ENCODE measurements at regions of chr18 and their contacts with region 1.

Region 1: GRCh38 chr18:63518178-63519012 is 23.8 kb upstream of the SERPINB12 start:
- DNase-seq: peak; percentile 35
- H3K4me3 ChIP-seq: no peak overlapping the region; a peak in 1 of 4 replicates
- H3K27ac ChIP-seq: no peak overlapping the region
- H3K4me1 ChIP-seq: no peaks in the 10 kb centered on the region
- H3K27me3 ChIP-seq: peaks cover 46% of the 10 kb centered on the region
- CTCF ChIP-seq: peak; percentile 80
- EP300 ChIP-seq: no peak
- RAD21 ChIP-seq: peak; percentile 85

Region 2: DNA sequence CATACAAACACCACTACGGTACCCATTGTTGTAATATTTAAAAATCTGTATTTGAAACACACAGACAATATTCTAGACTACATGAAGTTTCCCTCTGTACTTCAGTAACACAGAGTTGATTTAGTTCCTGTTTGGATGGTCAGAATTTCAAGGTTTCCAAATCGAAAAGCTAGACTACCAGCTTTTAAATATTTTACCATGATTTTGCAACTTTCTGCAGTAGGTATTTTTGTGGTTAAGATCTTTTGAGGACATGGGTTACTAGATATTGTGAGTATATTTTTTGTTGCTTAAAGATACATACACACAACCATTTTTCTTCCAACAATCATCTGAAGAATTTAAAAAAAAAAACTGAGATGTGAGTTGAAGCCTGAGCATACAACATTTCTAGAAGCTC is 30.7 kb before region 1 on chr18:
- CTCF ChIA-PET with region 1: interaction called, 11 read pairs
- POLR2A ChIA-PET with region 1: no interaction called
- DNase-seq: no peak
- H3K4me3 ChIP-seq: no peak overlapping the region
- H3K27ac ChIP-seq: no peak overlapping the region
- H3K4me1 ChIP-seq: no peaks in the 10 kb centered on the region
- H3K27me3 ChIP-seq: peaks cover 18% of the 10 kb centered on the region; the same call in 1 of the 2 replicates
- CTCF ChIP-seq: no peak
- EP300 ChIP-seq: no peak
- RAD21 ChIP-seq: no peak

Region 3: DNA sequence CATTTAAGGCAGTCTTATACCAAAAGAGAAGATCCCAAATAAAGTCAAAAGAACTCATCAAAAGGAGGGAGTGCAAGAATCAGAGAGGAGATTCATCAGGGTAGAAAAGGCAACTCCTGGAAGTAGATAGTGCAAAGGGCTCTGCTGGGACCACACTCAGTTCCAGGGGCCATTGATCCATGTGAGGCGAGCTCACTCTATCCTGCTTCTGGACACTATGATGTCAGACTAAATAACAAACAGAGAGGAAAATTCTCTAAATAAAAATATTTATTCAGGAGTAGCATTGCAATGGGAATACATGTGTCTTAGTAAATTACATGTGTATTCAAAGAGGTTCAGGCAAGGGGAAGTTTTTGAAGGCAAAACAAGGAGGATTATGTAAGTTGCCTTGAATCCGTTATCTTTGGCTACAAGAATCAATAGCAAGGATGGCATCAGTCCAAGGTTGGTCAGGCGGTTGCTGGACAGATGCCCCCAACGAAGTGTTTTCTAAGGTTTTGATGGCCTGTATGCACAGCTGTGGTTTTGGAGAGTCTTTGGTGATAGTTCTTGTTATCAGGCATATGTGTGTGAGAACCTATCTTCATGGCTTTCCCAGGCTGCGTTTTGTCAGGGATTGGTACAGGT is 10.6 kb after region 1 on chr18:
- CTCF ChIA-PET with region 1: interaction called, 24 read pairs
- POLR2A ChIA-PET with region 1: no interaction called
- DNase-seq: no peak
- H3K4me3 ChIP-seq: no peak overlapping the region
- H3K27ac ChIP-seq: no peak overlapping the region
- H3K4me1 ChIP-seq: no peaks in the 10 kb centered on the region
- H3K27me3 ChIP-seq: peaks cover 8% of the 10 kb centered on the region; the same call in 1 of the 2 replicates
- CTCF ChIP-seq: no peak
- EP300 ChIP-seq: no peak
- RAD21 ChIP-seq: no peak

Region 4: DNA sequence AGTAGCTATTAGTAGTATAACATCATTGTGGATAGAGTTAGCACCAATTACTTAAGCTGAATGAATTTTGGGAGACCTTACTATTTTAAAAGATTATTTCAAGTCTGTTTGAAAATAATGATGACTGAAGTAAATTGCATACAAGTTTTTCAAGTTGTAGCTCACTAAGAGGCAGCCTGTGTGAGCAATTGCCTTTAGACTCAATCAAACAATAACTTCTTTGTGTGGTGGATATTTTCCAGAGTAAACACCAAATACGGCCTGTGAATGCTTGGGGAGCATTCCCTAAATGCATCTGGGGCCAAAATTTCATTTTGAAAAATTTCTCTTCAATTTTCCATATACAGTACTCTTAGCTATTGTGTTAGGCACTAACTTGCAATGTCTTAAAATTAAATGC is 31.7 kb after region 1 on chr18:
- CTCF ChIA-PET with region 1: interaction called, 17 read pairs
- POLR2A ChIA-PET with region 1: no interaction called
- DNase-seq: no peak
- H3K4me3 ChIP-seq: no peak overlapping the region
- H3K27ac ChIP-seq: no peak overlapping the region
- H3K4me1 ChIP-seq: peaks cover 0 to 4% of the 10 kb centered on the region in 2 experiments; a peak in 1 of 4 replicates
- H3K27me3 ChIP-seq: no peaks in the 10 kb centered on the region
- CTCF ChIP-seq: no peak
- EP300 ChIP-seq: no peak
- RAD21 ChIP-seq: no peak

Region 5: GRCh38 chr18:63578357-63578958 is 60.1 kb after region 1 on chr18:
- CTCF ChIA-PET with region 1: interaction called, 42 read pairs
- POLR2A ChIA-PET with region 1: no interaction called
- DNase-seq: peak; percentile 28
- H3K4me3 ChIP-seq: no peak overlapping the region; a peak in 1 of 4 replicates
- H3K27ac ChIP-seq: no peak overlapping the region
- H3K4me1 ChIP-seq: no peaks in the 10 kb centered on the region; a peak in 1 of 4 replicates
- H3K27me3 ChIP-seq: no peaks in the 10 kb centered on the region; the same call in 1 of the 2 replicates
- CTCF ChIP-seq: peak; percentile 72
- EP300 ChIP-seq: no peak
- RAD21 ChIP-seq: peak; percentile 72

Region 6: GRCh38 chr18:63848159-63848558 is 329.8 kb after region 1 on chr18:
- CTCF ChIA-PET with region 1: interaction called, 44 read pairs
- POLR2A ChIA-PET with region 1: no interaction called
- DNase-seq: peak; percentile 22
- H3K4me3 ChIP-seq: no peak overlapping the region
- H3K27ac ChIP-seq: no peak overlapping the region
- H3K4me1 ChIP-seq: no peaks in the 10 kb centered on the region; a peak in 1 of 4 replicates
- H3K27me3 ChIP-seq: no peaks in the 10 kb centered on the region; the same call in 1 of the 2 replicates
- CTCF ChIP-seq: peak; percentile 85
- EP300 ChIP-seq: no peak
- RAD21 ChIP-seq: peak; percentile 76

Measured in SK-N-SH (cell line).